ENCODE measurements at regions of chr1 and their contacts with region 1.

Region 1: GRCh38 chr1:209565759-209566678 is 17.5 kb upstream of the CAMK1G start:
- DNase-seq: peak; percentile 86
- H3K4me3 Mint-ChIP-seq: no peak overlapping the region
- H3K27ac Mint-ChIP-seq: peak overlapping the region; percentile 16
- H3K4me1 Mint-ChIP-seq: peaks cover 10% of the 10 kb centered on the region
- H3K27me3 Mint-ChIP-seq: peaks cover 64% of the 10 kb centered on the region

Region 2: GRCh38 chr1:209202830-209203439 is 363.1 kb before region 1 on chr1:
- CTCF ChIA-PET with region 1: interaction called, 17 read pairs
- DNase-seq: no peak
- H3K4me3 Mint-ChIP-seq: no peak overlapping the region
- H3K27ac Mint-ChIP-seq: no peak overlapping the region
- H3K4me1 Mint-ChIP-seq: no peaks in the 10 kb centered on the region
- H3K27me3 Mint-ChIP-seq: peaks cover 31% of the 10 kb centered on the region

Region 3: GRCh38 chr1:209248649-209249279 is 317.3 kb before region 1 on chr1:
- CTCF ChIA-PET with region 1: interaction called, 11 read pairs
- DNase-seq: peak; percentile 63
- H3K4me3 Mint-ChIP-seq: no peak overlapping the region
- H3K27ac Mint-ChIP-seq: no peak overlapping the region
- H3K4me1 Mint-ChIP-seq: no peaks in the 10 kb centered on the region
- H3K27me3 Mint-ChIP-seq: no peaks in the 10 kb centered on the region

Region 4: GRCh38 chr1:209576798-209577197 is 10.8 kb after region 1 on chr1:
- CTCF ChIA-PET with region 1: interaction called, 24 read pairs
- DNase-seq: peak; percentile 80
- H3K4me3 Mint-ChIP-seq: no peak overlapping the region
- H3K27ac Mint-ChIP-seq: no peak overlapping the region
- H3K4me1 Mint-ChIP-seq: no peaks in the 10 kb centered on the region
- H3K27me3 Mint-ChIP-seq: peaks cover 39% of the 10 kb centered on the region

Region 5: DNA sequence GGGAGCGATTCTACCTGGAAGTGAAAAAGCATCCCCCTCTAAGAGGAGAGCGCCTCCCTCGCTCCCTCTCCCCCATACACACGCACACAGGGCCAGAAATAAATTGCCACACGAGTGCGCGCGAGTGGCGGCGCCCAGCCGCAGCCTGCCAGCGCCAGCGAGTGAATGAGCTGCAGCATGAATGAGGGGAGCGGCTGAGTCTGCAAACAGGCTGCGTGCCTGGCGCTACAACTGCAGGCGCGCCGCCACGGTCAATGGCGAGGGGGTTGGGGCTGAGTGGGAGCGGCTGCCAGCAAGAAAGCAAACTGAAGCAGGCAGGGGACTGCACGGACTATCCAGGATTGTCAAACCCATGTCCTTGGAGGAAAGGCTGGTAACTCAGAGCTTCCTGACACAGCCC is 19.7 kb after region 1 on chr1:
- CTCF ChIA-PET with region 1: interaction called, 24 read pairs
- DNase-seq: peak; percentile 40
- H3K4me3 Mint-ChIP-seq: no peak overlapping the region
- H3K27ac Mint-ChIP-seq: no peak overlapping the region
- H3K4me1 Mint-ChIP-seq: peaks cover 2% of the 10 kb centered on the region
- H3K27me3 Mint-ChIP-seq: peaks cover 16% of the 10 kb centered on the region

Region 6: GRCh38 chr1:209627732-209628196 is 61.7 kb after region 1 on chr1:
- CTCF ChIA-PET with region 1: interaction called, 12 read pairs
- DNase-seq: peak; percentile 84
- H3K4me3 Mint-ChIP-seq: no peak overlapping the region
- H3K27ac Mint-ChIP-seq: no peak overlapping the region
- H3K4me1 Mint-ChIP-seq: no peaks in the 10 kb centered on the region
- H3K27me3 Mint-ChIP-seq: peaks cover 32% of the 10 kb centered on the region

Region 7: DNA sequence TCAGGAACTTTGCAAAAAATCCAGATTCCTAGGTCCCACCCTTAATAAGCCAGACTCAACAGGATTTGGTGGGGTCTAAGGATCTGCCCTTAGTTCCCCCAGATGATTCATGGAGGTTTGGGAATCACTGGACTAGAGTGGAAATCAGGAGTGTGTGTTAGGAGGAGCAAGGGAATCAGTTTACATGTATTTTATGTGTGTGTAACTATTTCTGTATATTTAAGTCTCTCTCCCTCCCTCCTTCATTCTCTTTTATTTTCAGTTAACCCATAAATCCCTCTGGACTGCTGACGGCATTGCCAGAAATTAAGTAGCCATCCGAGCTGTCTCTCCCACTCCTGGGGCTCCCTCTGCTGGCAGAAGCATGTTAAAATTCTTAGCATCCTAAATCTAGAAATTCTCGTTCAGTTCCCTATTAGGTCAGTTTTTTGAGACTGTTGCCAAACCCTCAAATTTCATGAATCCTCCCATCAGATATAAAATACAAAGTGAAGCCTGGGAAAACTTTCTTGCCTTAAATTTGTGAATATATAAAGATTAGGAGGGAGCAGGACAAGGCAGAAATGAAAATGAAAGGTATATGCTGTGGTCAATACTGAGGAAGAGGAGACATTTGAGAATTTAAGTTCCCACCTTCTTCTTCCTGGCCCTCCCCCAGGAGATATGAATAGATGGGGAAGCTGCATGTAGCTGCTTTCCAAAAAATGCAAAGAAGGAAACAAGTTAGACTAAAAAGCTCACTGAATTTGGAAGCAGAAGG is 126.9 kb after region 1 on chr1:
- CTCF ChIA-PET with region 1: interaction called, 25 read pairs
- DNase-seq: peak; percentile 81
- H3K4me3 Mint-ChIP-seq: no peak overlapping the region
- H3K27ac Mint-ChIP-seq: no peak overlapping the region
- H3K4me1 Mint-ChIP-seq: peaks cover 60% of the 10 kb centered on the region
- H3K27me3 Mint-ChIP-seq: peaks cover 10% of the 10 kb centered on the region

Region 8: DNA sequence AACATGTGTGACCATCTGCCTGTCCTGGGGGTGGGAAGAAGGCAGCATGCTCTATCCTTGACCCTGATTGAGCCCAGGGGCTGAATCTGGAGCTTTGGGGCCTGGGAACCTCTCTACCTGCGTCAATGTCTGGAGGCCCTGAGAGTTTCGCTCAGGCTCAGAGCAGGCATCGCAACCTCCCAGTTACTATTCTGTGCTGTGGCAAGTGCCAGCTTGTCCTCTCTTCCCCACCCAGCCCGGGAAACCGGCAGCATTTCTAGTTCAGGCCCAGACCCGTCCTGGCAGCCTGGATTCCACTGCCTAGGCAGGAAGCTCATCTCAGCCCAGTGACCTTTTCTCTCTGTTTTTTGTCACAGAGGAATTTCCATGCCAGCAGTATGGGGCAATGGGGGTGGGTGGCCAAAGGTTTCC is 249.9 kb after region 1 on chr1:
- CTCF ChIA-PET with region 1: no interaction called
- DNase-seq: no peak
- H3K4me3 Mint-ChIP-seq: no peak overlapping the region
- H3K27ac Mint-ChIP-seq: no peak overlapping the region
- H3K4me1 Mint-ChIP-seq: no peaks in the 10 kb centered on the region
- H3K27me3 Mint-ChIP-seq: peaks cover 32% of the 10 kb centered on the region

Measured in activated naive CD4-positive, alpha-beta T cell treated with anti-CD3 and anti-CD28 coated beads, Interleukin-2, amount 10 ng/mL, durations not matched to agents 7 days and 5 days (primary cell).